ENCODE measurements at regions of chr3 and their contacts with region 1.

Region 1: GRCh38 chr3:9302425-9303181 is 53.2 kb upstream of the SRGAP3 start:
- DNase-seq: peak; percentile 87
- H3K4me3 Mint-ChIP-seq: peak overlapping the region; percentile 63
- H3K27ac Mint-ChIP-seq: no peak overlapping the region
- H3K4me1 Mint-ChIP-seq: peaks cover 23% of the 10 kb centered on the region
- H3K27me3 Mint-ChIP-seq: no peaks in the 10 kb centered on the region
- CTCF ChIP-seq: peak; percentile 93

Region 2: DNA sequence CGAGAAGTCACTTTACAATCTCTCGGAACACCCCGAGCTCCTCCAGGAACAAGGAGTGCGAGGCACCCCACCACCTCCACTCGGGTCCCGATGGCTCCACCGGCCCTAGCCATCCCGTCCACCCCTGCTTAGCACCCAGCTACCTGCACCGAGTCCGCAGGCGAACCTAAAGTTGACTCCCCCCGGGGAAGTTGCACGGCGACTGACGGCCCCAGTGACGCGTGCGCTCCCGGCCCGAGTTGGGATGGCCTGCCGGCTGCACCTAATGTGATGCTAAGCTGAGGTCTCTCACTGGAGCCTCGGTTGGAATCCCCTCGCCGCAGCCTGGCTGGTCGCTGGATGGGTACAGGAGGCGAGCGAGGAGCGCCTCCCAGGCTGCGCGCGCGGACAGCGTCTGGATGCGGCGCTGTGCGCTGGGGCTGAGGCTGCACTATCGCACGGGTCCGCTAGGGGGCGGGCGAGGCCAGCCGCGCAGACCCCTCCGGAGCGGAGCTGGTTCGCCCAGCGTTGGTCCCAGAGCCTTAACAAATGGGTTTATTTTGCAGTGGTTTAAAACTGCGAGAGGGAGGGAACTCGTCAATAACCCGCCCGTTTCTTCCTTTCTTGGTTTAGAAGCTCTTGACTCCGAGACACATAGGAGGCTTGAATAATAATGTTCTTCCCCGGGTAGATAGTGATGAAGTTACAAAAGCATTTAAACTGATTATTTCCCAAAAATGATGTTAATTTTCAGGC is 533.3 kb before region 1 on chr3 and contains the start of gene OXTR:
- CTCF ChIA-PET with region 1: interaction called, 5 read pairs
- POLR2A ChIA-PET with region 1: no interaction called
- intact Hi-C with region 1: loop called (anchors 1 kb)
- DNase-seq: peak; percentile 57
- H3K4me3 Mint-ChIP-seq: peak within 1 kb of the TSS; percentile 73
- H3K27ac Mint-ChIP-seq: no peak within 1 kb of the TSS
- H3K4me1 Mint-ChIP-seq: peaks cover 7% of the 10 kb centered on the region
- H3K27me3 Mint-ChIP-seq: peaks cover 14% of the 10 kb centered on the region
- CTCF ChIP-seq: peak; percentile 99
- total RNA-seq, gene OXTR: 0.63 and 1.2 TPM in 2 replicates

Region 3: DNA sequence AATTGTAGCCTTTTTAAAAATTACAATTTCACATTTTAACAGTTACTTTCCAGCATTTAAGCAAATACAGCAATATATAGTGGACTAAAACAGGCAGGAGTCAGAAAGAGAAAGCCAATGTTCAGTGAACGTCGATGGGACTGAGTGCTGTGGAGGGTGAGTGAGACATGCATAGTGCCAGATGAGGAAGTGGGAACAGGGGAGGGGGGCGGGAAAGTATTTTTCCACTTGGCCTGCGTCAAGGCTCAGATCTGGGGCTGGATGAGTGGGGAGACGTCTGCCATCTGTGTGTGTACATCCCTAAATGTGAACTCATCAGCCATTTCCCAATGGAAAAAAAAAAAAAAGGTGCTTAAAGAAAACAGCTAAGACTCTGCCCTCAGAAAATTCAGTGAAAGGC is 320.1 kb before region 1 on chr3:
- CTCF ChIA-PET with region 1: interaction called, 200 read pairs
- POLR2A ChIA-PET with region 1: interaction called, 6 read pairs
- intact Hi-C with region 1: no loop called
- DNase-seq: no peak
- H3K4me3 Mint-ChIP-seq: no peak overlapping the region
- H3K27ac Mint-ChIP-seq: no peak overlapping the region
- H3K4me1 Mint-ChIP-seq: no peaks in the 10 kb centered on the region
- H3K27me3 Mint-ChIP-seq: no peaks in the 10 kb centered on the region
- CTCF ChIP-seq: no peak

Region 4: GRCh38 chr3:9067352-9067975 is 235.1 kb before region 1 on chr3:
- CTCF ChIA-PET with region 1: interaction called, 13 read pairs
- POLR2A ChIA-PET with region 1: no interaction called
- intact Hi-C with region 1: loop called (anchors 1 kb)
- DNase-seq: peak; percentile 55
- H3K4me3 Mint-ChIP-seq: no peak overlapping the region
- H3K27ac Mint-ChIP-seq: no peak overlapping the region
- H3K4me1 Mint-ChIP-seq: no peaks in the 10 kb centered on the region
- H3K27me3 Mint-ChIP-seq: no peaks in the 10 kb centered on the region
- CTCF ChIP-seq: peak; percentile 89

Region 5: GRCh38 chr3:9224490-9224889 is 78.1 kb before region 1 on chr3:
- CTCF ChIA-PET with region 1: interaction called, 10 read pairs
- POLR2A ChIA-PET with region 1: no interaction called
- intact Hi-C with region 1: no loop called
- DNase-seq: peak; percentile 9
- H3K4me3 Mint-ChIP-seq: no peak overlapping the region
- H3K27ac Mint-ChIP-seq: no peak overlapping the region
- H3K4me1 Mint-ChIP-seq: peaks cover 9% of the 10 kb centered on the region
- H3K27me3 Mint-ChIP-seq: no peaks in the 10 kb centered on the region
- CTCF ChIP-seq: no peak

Region 6: GRCh38 chr3:9290566-9290965 is 12.0 kb before region 1 on chr3:
- CTCF ChIA-PET with region 1: interaction called, 12 read pairs
- POLR2A ChIA-PET with region 1: interaction called, 3 read pairs
- intact Hi-C with region 1: no loop called
- DNase-seq: no peak
- H3K4me3 Mint-ChIP-seq: no peak overlapping the region
- H3K27ac Mint-ChIP-seq: no peak overlapping the region
- H3K4me1 Mint-ChIP-seq: no peaks in the 10 kb centered on the region
- H3K27me3 Mint-ChIP-seq: no peaks in the 10 kb centered on the region
- CTCF ChIP-seq: no peak